CD4-positive, alpha-beta T cell (primary cell): ENCODE measurements at regions of chr11 and their contacts with region 1.

Region 1: DNA sequence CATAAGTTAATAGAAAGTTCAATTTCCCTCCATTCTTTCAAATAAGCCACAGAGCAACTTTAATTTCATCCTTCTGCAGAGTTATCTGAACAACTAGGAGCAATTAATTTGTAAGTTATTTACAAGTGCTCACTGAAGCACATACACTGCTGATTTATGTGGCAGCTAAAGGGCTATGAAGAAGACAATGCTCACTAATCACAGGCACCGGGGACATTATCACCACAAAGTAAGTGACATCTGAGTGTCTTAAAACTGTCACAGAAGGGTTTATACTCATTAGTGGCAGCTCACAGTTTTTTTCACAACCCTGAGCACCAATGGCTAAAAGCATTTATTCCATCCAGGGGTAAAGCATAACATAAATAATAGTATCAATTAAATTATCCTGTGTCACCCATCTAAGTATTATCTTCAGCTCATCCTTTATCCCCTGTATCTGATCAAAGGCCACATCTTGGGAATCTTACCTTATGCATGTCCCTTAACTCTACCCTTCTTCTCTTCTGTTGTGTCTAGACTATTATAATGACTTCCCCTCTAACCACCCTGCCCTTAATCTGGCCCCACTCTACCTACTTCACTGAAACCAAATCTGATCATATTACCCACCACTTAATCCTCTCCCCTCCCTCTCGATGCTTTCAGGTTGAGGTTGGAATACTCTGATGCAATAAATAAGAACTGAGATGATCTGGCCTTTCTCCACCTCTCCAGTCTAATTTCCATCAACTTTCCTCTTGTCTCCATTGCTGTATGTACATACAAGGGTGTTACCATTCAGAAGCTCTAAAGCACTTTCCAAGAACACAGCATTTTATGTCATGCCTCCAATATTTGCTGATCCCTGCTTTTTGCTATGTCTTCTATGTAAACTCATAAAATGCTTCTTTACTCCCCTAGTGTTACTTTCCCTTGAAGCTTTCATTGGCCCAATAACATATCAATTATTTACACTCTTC is 252.7 kb downstream of the CASP12 start:
- DNase-seq: no peak
- ATAC-seq: no peak
- H3K4me3 ChIP-seq: no peak overlapping the region
- H3K4me3 Mint-ChIP-seq: no peak overlapping the region
- H3K27ac ChIP-seq: no peak overlapping the region
- H3K27ac Mint-ChIP-seq: no peak overlapping the region
- H3K4me1 ChIP-seq: no peaks in the 10 kb centered on the region
- H3K4me1 Mint-ChIP-seq: no peaks in the 10 kb centered on the region
- H3K27me3 ChIP-seq: no peaks in the 10 kb centered on the region
- H3K27me3 Mint-ChIP-seq: no peaks in the 10 kb centered on the region
- CTCF ChIP-seq: no peak

Region 2: GRCh38 chr11:105524286-105524685 is 878.7 kb after region 1 on chr11:
- CTCF ChIA-PET with region 1: no interaction called
- POLR2A ChIA-PET with region 1: no interaction called
- intact Hi-C with region 1: loop called in 1 of 2 experiments (anchors 5 kb)
- DNase-seq: no peak
- ATAC-seq: no peak
- H3K4me3 ChIP-seq: no peak overlapping the region
- H3K4me3 Mint-ChIP-seq: no peak overlapping the region
- H3K27ac ChIP-seq: no peak overlapping the region
- H3K27ac Mint-ChIP-seq: no peak overlapping the region
- H3K4me1 ChIP-seq: no peaks in the 10 kb centered on the region
- H3K4me1 Mint-ChIP-seq: no peaks in the 10 kb centered on the region
- H3K27me3 ChIP-seq: no peaks in the 10 kb centered on the region
- H3K27me3 Mint-ChIP-seq: no peaks in the 10 kb centered on the region
- CTCF ChIP-seq: no peak